Mucosa of descending colon (tissue), 3 donors: ENCODE measurements at regions of chr14 and their contacts with region 1.

Region 1: DNA sequence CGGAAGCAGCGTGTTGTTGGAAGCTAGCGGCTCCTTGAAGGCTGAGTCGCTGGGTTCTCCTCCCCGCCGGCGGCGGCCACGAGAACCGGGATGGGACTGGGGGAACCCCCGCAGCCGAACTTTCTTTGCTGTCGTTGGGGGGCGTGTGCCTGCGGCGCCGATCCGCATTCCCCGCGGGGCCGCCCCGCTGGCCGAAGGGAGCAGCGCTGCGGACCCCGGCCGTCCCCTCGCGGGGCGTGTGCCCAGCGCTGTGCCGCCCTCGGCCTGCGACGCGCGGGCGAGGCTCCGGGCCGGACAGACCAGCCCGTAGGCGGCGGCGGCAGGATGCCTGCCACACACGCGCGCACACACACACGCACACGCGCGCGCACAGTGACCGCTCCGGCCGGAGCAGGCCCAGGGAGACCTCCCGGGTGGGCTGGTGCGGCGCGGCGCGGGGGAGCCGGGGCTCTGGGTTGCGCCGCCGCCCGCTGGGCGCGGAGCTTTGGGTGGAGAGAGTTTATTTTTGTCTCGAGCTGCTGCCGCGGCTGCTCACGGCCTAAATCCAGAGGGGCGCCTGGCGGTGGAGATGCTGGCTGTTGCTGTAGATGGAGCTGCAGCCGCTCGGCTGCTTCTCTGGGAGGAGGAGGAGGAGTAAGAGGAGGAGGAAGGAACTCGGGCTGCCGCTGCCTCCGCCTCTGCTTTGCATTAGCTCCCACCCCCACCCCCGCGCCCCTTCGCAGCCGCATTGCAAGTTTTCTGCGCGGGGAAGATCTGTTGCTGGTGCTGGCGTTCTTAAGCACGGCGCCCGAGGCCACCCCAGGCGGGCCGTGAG is at the start of gene SAMD4A:
- DNase-seq: peak; percentile 74 to 89 (median 79)
- ATAC-seq: peak; percentile 40
- H3K4me3 ChIP-seq: peak within 1 kb of the TSS; percentile 47
- H3K4me1 ChIP-seq: peaks cover 14% of the 10 kb centered on the region
- CTCF ChIP-seq: no peak
- total RNA-seq, gene SAMD4A: 14.7 to 82.1 (median 16.5) TPM

Region 2: GRCh38 chr14:54691525-54692283 is 125.1 kb after region 1 on chr14:
- intact Hi-C with region 1: loop called (anchors 5 to 10 kb)
- DNase-seq: peak; percentile 59 to 87 (median 76)
- ATAC-seq: peak; percentile 91
- H3K4me3 ChIP-seq: no peak overlapping the region
- H3K4me1 ChIP-seq: no peaks in the 10 kb centered on the region
- CTCF ChIP-seq: peak; percentile 76

Region 3: GRCh38 chr14:54774874-54775273 is 208.3 kb after region 1 on chr14:
- intact Hi-C with region 1: loop called in 1 of 2 experiments (anchors 1 kb)
- DNase-seq: no peak
- ATAC-seq: no peak
- H3K4me3 ChIP-seq: no peak overlapping the region
- H3K4me1 ChIP-seq: peaks cover 4% of the 10 kb centered on the region
- CTCF ChIP-seq: no peak